H1 (cell line): ENCODE measurements at regions of chr16 and their contacts with region 1.

Region 1: GRCh38 chr16:69796351-69797118 is 34.4 kb downstream of the WWP2 start:
- DNase-seq: peak in 1 of 2 experiments; percentile 60
- H3K4me3 ChIP-seq: peak overlapping the region in 1 of 4 experiments; percentile 30; a peak in 2 of 8 replicates
- H3K27ac ChIP-seq: no peak overlapping the region
- H3K4me1 ChIP-seq: peaks cover 0 to 5% (median 0%) of the 10 kb centered on the region in 4 experiments; a peak in 2 of 7 replicates
- H3K27me3 ChIP-seq: no peaks in the 10 kb centered on the region
- CTCF ChIP-seq: peak; percentile 16 to 87 (median 80)
- EP300 ChIP-seq: peak in 1 of 2 experiments; percentile 94; a peak in 2 of 3 replicates
- POLR2A ChIP-seq: no peak
- RAD21 ChIP-seq: peak; percentile 91

Region 2: GRCh38 chr16:69494993-69495392 is 301.5 kb before region 1 on chr16:
- CTCF ChIA-PET with region 1: no interaction called
- POLR2A ChIA-PET with region 1: no interaction called
- DNase-seq: peak; percentile 29 to 83
- H3K4me3 ChIP-seq: no peak overlapping the region
- H3K27ac ChIP-seq: no peak overlapping the region
- H3K4me1 ChIP-seq: no peaks in the 10 kb centered on the region; a peak in 1 of 7 replicates
- H3K27me3 ChIP-seq: no peaks in the 10 kb centered on the region
- CTCF ChIP-seq: peak; percentile 75 to 84 (median 83)
- EP300 ChIP-seq: no peak
- POLR2A ChIP-seq: no peak
- RAD21 ChIP-seq: peak; percentile 70 to 82

Region 3: DNA sequence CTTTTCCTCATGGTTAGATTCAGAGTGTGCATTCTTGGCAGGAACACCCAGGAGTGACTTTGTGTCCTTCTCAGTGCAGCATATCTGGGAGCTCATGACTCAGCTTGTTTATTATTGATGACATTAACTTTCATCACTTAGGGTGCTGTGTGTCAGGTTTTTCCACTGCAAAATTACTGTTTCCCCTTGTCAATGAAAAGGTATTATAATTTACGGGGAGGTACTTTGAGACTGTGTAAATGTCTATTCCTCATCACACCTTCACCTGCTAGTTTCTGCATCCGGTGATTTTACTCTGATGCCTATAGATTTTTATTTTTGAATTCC is 16.1 kb after region 1 on chr16:
- CTCF ChIA-PET with region 1: interaction called, 33 read pairs
- POLR2A ChIA-PET with region 1: no interaction called
- DNase-seq: no peak
- H3K4me3 ChIP-seq: no peak overlapping the region
- H3K27ac ChIP-seq: no peak overlapping the region
- H3K4me1 ChIP-seq: no peaks in the 10 kb centered on the region
- H3K27me3 ChIP-seq: no peaks in the 10 kb centered on the region
- CTCF ChIP-seq: no peak
- EP300 ChIP-seq: no peak
- POLR2A ChIP-seq: no peak
- RAD21 ChIP-seq: no peak

Region 4: GRCh38 chr16:69839798-69840409 is 43.4 kb after region 1 on chr16:
- CTCF ChIA-PET with region 1: interaction called, 11 read pairs
- POLR2A ChIA-PET with region 1: interaction called, 3 read pairs
- DNase-seq: no peak
- H3K4me3 ChIP-seq: no peak overlapping the region
- H3K27ac ChIP-seq: no peak overlapping the region
- H3K4me1 ChIP-seq: no peaks in the 10 kb centered on the region
- H3K27me3 ChIP-seq: no peaks in the 10 kb centered on the region
- CTCF ChIP-seq: no peak
- EP300 ChIP-seq: no peak
- POLR2A ChIP-seq: no peak
- RAD21 ChIP-seq: no peak

Region 5: GRCh38 chr16:69859105-69859989 is 62.8 kb after region 1 on chr16:
- CTCF ChIA-PET with region 1: interaction called, 54 read pairs
- POLR2A ChIA-PET with region 1: no interaction called
- DNase-seq: peak; percentile 25 to 76
- H3K4me3 ChIP-seq: no peak overlapping the region
- H3K27ac ChIP-seq: no peak overlapping the region
- H3K4me1 ChIP-seq: no peaks in the 10 kb centered on the region
- H3K27me3 ChIP-seq: no peaks in the 10 kb centered on the region
- CTCF ChIP-seq: peak; percentile 39 to 55 (median 52)
- EP300 ChIP-seq: no peak
- POLR2A ChIP-seq: no peak
- RAD21 ChIP-seq: peak; percentile 37 to 55; a peak in 3 of 4 replicates

Region 6: DNA sequence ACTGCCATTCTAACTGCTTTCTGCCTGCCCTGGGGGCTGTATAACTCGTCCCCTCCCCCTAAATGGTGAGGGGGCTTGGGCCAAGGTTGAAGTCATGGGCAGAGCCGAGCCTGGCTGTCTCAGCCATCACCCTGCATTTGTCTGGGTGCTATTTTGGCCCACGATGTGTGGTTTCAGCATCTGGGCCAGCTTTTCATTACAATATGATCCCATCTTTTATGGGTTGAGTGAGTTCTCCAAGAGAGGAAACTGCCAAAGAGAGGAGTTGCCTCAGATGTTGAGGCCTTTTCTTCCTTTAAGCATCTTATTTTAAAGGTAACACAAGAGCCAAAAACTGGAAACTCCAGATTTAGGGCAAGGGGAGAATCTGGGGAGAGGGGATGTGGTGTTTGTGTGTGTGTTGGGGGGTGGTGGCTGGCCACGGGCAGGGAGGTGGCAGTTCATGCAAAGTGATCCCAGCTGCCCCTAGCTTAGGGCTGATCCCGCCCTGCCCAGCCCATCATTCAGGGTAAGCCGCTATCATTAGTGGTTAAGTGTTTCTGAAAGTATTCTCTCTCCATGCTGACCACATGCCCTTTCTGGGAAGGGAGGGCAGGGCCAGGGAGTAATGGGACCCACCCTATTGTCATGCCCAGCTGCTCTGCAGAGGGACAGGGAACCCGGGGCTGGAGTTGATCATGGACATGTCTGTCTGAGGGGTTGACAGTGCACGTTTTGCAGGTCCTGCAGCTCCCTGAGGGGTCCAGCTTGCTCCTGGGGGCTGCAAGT is 71.4 kb after region 1 on chr16:
- CTCF ChIA-PET with region 1: interaction called, 54 read pairs
- POLR2A ChIA-PET with region 1: interaction called, 3 read pairs
- DNase-seq: no peak
- H3K4me3 ChIP-seq: no peak overlapping the region
- H3K27ac ChIP-seq: no peak overlapping the region
- H3K4me1 ChIP-seq: no peaks in the 10 kb centered on the region
- H3K27me3 ChIP-seq: no peaks in the 10 kb centered on the region
- CTCF ChIP-seq: no peak
- EP300 ChIP-seq: no peak
- POLR2A ChIP-seq: no peak
- RAD21 ChIP-seq: no peak

Region 7: GRCh38 chr16:69930117-69930776 is 133.7 kb after region 1 on chr16:
- CTCF ChIA-PET with region 1: interaction called, 123 read pairs
- POLR2A ChIA-PET with region 1: interaction called, 3 read pairs
- DNase-seq: peak in 1 of 2 experiments; percentile 74
- H3K4me3 ChIP-seq: no peak overlapping the region
- H3K27ac ChIP-seq: no peak overlapping the region
- H3K4me1 ChIP-seq: peaks cover 0 to 3% (median 2%) of the 10 kb centered on the region in 4 experiments; a peak in 3 of 7 replicates
- H3K27me3 ChIP-seq: no peaks in the 10 kb centered on the region
- CTCF ChIP-seq: peak; percentile 66 to 78 (median 76)
- EP300 ChIP-seq: no peak
- POLR2A ChIP-seq: no peak
- RAD21 ChIP-seq: peak; percentile 70 to 81

Region 8: GRCh38 chr16:69937465-69937951 is 141.0 kb after region 1 on chr16:
- CTCF ChIA-PET with region 1: interaction called, 123 read pairs
- POLR2A ChIA-PET with region 1: no interaction called
- DNase-seq: no peak
- H3K4me3 ChIP-seq: no peak overlapping the region
- H3K27ac ChIP-seq: no peak overlapping the region
- H3K4me1 ChIP-seq: no peaks in the 10 kb centered on the region; a peak in 2 of 7 replicates
- H3K27me3 ChIP-seq: no peaks in the 10 kb centered on the region
- CTCF ChIP-seq: peak; percentile 37 to 42 (median 42)
- EP300 ChIP-seq: no peak
- POLR2A ChIP-seq: no peak
- RAD21 ChIP-seq: peak; percentile 47 to 56